A673 (cell line): ENCODE measurements at regions of chr16 and their contacts with region 1.

Region 1: DNA sequence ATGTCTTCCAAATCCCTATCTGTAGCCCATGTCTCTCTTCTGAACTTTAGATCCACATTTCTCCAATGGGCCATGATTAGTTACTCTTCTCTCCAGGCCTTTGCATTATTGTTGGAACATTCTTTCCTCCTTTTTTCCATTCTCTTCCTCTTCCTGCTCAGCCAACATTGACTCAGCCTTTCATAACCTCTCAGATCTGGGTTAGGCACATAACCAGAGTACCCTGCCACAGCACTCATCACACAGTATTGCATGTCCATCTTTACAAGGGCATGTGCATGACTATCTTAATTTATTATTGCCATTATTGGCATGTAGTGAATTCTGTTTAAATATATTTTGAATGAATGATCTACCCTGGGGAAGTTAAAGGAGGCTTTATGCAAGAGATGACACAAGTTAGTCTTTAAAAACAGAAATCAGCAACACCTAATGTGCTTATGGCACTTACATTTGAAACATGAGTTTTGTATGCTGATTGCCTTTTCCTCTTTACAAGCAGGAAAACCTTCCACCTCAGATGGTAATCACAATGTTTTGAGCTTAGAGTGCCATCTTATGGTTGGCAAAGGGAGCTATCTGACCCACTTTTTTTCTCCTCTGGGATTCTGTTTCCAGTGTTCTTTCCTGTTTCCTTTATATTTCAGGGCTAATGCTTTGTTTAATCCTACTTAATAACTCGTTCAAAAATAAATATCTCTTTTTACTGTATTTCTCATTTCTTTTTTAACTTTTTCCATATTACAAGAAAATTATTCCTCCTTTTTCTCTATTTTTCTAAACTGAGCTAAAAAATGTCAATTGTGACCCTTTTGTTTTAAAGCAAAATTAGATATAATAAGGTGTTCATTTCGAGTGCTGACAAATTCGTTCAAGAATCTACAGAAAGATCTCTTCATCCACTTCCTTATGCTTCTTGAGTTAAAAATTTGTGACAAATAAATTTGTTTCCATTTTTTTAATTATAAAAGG is 151.0 kb upstream of the RBL2 start:
- DNase-seq: peak; percentile 79
- H3K4me3 ChIP-seq: no peak overlapping the region
- H3K27ac ChIP-seq: no peak overlapping the region
- H3K4me1 ChIP-seq: no peaks in the 10 kb centered on the region
- H3K27me3 ChIP-seq: no peaks in the 10 kb centered on the region
- CTCF ChIP-seq: peak; percentile 78

Region 2: GRCh38 chr16:52976539-52977167 is 306.6 kb before region 1 on chr16:
- CTCF ChIA-PET with region 1: interaction called, 10 read pairs
- POLR2A ChIA-PET with region 1: no interaction called
- intact Hi-C with region 1: no loop called
- DNase-seq: peak; percentile 53
- H3K4me3 ChIP-seq: no peak overlapping the region
- H3K27ac ChIP-seq: no peak overlapping the region
- H3K4me1 ChIP-seq: no peaks in the 10 kb centered on the region
- H3K27me3 ChIP-seq: peaks cover 3% of the 10 kb centered on the region
- CTCF ChIP-seq: peak; percentile 63

Region 3: DNA sequence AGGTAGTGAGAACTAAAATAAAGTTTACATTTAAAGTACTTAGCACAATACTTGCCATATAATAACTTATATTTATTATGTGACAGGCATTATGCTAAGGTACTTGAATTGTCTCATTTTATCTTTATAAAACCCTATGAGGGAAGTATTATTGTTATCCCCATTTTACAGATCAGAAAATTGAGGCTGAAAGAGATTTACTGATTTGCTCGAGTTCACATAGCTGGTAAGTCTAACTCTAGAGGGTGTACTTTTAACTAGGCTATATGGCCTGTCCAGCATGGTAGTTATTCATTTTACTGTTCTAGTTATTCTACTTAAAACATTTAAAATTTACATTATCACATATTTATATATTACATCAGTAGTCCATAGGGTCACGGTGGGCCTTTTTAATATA is 37.7 kb after region 1 on chr16:
- CTCF ChIA-PET with region 1: no interaction called
- POLR2A ChIA-PET with region 1: no interaction called
- intact Hi-C with region 1: no loop called
- DNase-seq: no peak
- H3K4me3 ChIP-seq: no peak overlapping the region
- H3K27ac ChIP-seq: no peak overlapping the region
- H3K4me1 ChIP-seq: no peaks in the 10 kb centered on the region
- H3K27me3 ChIP-seq: no peaks in the 10 kb centered on the region
- CTCF ChIP-seq: no peak